Gastrocnemius medialis (tissue), 4 donors: ENCODE measurements at regions of chr2 and their contacts with region 1.

Region 1: GRCh38 chr2:120817136-120817955 is 81.7 kb downstream of the GLI2 start:
- DNase-seq: no peak
- ATAC-seq: no peak
- H3K4me3 ChIP-seq: no peak overlapping the region
- H3K27ac ChIP-seq: no peak overlapping the region
- H3K4me1 ChIP-seq: no peaks in the 10 kb centered on the region
- H3K27me3 ChIP-seq: no peaks in the 10 kb centered on the region
- CTCF ChIP-seq: no peak
- POLR2A ChIP-seq: no peak

Region 2: GRCh38 chr2:120219766-120220165 is 597.6 kb before region 1 on chr2:
- in situ Hi-C with region 1: no loop called
- intact Hi-C with region 1: no loop called
- DNase-seq: no peak
- ATAC-seq: no peak
- H3K4me3 ChIP-seq: no peak overlapping the region
- H3K27ac ChIP-seq: peak overlapping the region in 1 of 4 donors; percentile 6
- H3K4me1 ChIP-seq: peaks cover 25% of the 10 kb centered on the region in 2 donors
- H3K27me3 ChIP-seq: no peaks in the 10 kb centered on the region
- CTCF ChIP-seq: no peak
- POLR2A ChIP-seq: no peak

Region 3: DNA sequence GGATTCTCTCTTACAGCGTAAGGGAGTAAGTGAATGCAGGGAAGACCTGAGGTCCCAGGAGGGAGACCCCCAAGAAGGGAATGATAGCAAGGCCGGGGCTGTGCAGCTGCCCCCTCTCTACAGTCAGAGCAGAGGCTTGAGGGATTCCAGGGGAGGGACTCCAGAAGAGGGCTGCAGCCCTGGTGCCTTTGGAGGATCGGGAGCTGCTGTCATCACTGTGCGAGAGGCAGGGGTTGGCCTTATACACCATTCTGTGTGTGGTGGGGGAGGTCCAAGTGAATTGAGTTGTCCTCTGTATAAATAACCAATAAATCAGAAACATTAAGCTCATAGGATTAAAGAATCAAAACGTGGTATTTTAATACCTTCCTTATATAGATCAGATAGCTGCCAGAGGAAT is 33.2 kb after region 1 on chr2:
- in situ Hi-C with region 1: no loop called
- intact Hi-C with region 1: loop called (anchors 1 kb)
- DNase-seq: no peak
- ATAC-seq: no peak
- H3K4me3 ChIP-seq: no peak overlapping the region
- H3K27ac ChIP-seq: no peak overlapping the region
- H3K4me1 ChIP-seq: no peaks in the 10 kb centered on the region
- H3K27me3 ChIP-seq: no peaks in the 10 kb centered on the region
- CTCF ChIP-seq: no peak
- POLR2A ChIP-seq: no peak

Region 4: DNA sequence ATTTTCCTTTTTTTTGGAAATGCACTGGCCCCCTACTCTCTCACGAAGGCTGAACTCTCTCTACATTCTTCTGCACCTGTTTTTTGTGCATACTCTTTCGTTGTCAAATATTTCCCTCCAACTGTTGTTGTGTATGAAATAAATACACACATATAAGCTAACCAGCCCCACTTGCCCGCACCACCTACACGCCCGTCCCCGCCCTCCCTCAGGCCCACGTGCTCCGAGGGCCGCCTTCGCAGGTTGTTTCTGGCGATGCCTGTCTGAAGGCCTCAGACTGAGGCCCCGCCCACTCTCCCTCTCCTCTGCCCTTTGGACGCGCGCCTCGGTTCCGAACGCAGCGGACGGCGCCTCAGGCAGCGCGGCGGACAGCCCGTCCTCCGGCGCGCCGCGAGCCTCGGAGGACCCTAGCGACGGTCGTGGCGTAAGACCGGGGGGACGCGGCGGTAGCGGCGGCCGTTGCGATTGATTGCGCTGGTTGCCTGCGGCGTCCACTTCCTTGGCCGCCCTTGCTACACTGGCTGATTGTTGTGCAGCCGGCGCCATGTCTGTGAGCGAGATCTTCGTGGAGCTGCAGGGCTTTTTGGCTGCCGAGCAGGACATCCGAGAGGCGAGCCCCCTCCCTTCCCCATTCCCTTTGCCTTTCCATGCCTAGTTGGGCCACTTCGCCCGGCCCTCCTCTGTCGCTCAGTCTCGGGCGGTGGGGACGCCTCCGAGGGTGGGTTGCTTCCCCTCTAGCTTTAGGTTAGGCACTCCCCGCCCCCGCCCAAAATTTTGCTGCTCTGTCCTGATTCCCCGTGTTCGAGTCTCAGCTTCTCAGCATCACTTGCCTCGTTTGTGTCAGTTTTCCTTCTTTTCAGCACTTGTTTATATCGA is 938.1 kb after region 1 on chr2 and contains the start of gene TSN:
- in situ Hi-C with region 1: no loop called
- intact Hi-C with region 1: no loop called
- DNase-seq: peak; percentile 97
- ATAC-seq: peak; percentile 99
- H3K4me3 ChIP-seq: peak within 1 kb of the TSS; percentile 79 to 94 (median 90)
- H3K27ac ChIP-seq: peak within 1 kb of the TSS; percentile 76 to 89 (median 85)
- H3K4me1 ChIP-seq: peaks cover 29 to 32% of the 10 kb centered on the region in 2 donors
- H3K27me3 ChIP-seq: no peaks in the 10 kb centered on the region
- CTCF ChIP-seq: no peak
- POLR2A ChIP-seq: peak; percentile 43 to 50
- total RNA-seq, gene TSN: 31.8 to 49.3 (median 41.2) TPM